ENCODE measurements at regions of chr2 and their contacts with region 1.

Region 1: GRCh38 chr2:105337124-105338019 is at the start of gene C2orf49:
- DNase-seq: peak; percentile 74 to 90 (median 85)
- H3K4me3 ChIP-seq: peak within 1 kb of the TSS; percentile 75 to 100 (median 90)
- H3K27ac ChIP-seq: peak within 1 kb of the TSS; percentile 74 to 99 (median 96)
- H3K27me3 ChIP-seq: no peaks in the 10 kb centered on the region
- CTCF ChIP-seq: peak in 11 of 56 donors; percentile 6 to 44 (median 25)
- total RNA-seq, gene C2orf49: 15.9 to 35.0 (median 24.8) TPM

Region 2: DNA sequence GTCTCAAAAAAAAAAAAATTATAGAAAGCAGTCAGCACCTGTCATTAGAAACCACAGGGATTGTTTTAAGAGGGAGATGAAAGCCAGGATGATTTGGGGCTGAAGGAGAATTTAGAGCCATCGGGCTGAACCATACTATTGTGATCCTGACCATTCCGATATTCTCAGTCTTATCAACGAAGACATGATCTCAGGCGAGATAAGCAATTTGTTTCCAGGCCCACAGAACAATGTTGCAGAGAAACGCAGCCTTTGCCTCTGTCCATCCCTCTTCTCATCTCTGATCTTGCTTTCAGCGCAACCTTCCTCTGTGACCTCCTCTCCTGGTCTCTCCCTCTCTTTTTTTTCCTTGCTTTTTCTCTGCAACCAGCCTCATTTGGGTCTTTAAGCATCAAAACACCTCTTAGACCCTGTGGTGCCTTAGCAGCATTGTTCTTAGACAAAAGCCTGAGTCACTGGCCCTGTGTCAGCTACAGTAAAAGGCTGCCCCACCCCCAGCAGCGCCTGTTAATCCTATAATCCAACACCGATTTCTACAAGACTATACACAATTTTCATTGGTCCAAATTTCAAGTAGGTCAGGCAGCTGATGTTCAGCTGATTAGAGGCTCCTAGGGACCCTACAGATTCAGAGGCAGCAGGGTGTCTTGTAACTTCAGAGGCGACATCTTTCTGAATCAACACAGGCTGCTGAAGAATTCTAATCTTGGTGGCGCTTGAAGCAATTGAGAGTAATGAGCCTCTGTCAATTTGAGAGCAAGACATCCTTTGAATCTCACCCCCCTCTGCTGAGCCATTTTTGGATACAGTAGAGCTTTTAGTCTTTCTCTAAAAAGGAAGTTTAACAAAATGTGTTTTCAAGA is 613.4 kb after region 1 on chr2:
- intact Hi-C with region 1: no loop called
- DNase-seq: peak in 1 of 10 donors; percentile 21
- H3K4me3 ChIP-seq: no peak overlapping the region
- H3K27ac ChIP-seq: peak overlapping the region in 2 of 59 donors; percentile 19 to 45
- H3K27me3 ChIP-seq: no peaks in the 10 kb centered on the region
- CTCF ChIP-seq: no peak

Region 3: DNA sequence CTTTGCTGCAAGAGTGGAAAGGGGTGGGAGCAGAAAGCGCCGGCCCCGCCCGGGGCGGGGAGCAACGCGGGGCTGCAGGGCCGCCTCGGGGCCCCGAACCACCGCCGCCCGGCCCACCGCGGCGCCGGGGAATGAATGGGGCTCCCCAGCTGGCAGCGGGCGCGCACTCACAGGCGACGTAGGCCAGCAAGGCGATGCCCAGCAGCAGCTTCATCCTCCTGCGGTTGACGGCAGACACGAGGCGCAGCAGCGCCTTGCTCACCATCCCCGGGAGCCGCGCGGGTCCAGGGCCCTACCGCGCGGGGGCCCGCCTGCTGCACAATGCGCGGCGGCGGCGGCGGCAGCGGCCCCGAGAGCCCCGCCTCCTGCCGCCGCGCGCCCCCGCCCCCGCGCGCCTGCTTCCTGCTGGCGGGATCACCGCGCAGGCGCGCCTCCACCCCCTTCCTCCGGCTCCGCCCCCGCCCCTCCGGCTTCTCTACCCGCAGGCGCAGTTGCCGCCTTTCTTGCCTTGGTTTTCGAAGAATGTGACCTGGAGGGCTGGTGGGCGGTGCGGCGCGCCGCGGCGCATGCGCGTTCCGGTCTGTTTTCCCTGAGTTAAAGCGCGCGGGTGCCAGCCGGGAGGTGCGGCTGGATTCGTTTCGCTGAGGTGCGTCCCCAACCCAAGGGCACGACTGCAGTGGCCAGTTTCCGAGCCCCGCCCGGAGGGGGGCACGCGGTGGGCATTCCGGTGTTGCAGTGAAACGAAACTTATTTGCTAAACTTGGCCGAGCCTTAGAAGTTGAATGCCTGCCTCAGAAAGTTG is 856.8 kb after region 1 on chr2 and contains the start of gene UXS1:
- intact Hi-C with region 1: loop called (anchors 10 kb)
- DNase-seq: peak; percentile 91 to 96 (median 94)
- H3K4me3 ChIP-seq: peak within 1 kb of the TSS; percentile 66 to 99 (median 88)
- H3K27ac ChIP-seq: peak within 1 kb of the TSS in 57 of 59 donors; percentile 10 to 95 (median 83)
- H3K27me3 ChIP-seq: no peaks in the 10 kb centered on the region
- CTCF ChIP-seq: peak in 23 of 56 donors; percentile 2 to 45 (median 17)
- total RNA-seq, gene UXS1: 37.5 to 89.4 (median 64.7) TPM

Measured in dorsolateral prefrontal cortex (tissue), 120 donors.